ENCODE measurements at regions of chr17 and their contacts with region 1.

Region 1: DNA sequence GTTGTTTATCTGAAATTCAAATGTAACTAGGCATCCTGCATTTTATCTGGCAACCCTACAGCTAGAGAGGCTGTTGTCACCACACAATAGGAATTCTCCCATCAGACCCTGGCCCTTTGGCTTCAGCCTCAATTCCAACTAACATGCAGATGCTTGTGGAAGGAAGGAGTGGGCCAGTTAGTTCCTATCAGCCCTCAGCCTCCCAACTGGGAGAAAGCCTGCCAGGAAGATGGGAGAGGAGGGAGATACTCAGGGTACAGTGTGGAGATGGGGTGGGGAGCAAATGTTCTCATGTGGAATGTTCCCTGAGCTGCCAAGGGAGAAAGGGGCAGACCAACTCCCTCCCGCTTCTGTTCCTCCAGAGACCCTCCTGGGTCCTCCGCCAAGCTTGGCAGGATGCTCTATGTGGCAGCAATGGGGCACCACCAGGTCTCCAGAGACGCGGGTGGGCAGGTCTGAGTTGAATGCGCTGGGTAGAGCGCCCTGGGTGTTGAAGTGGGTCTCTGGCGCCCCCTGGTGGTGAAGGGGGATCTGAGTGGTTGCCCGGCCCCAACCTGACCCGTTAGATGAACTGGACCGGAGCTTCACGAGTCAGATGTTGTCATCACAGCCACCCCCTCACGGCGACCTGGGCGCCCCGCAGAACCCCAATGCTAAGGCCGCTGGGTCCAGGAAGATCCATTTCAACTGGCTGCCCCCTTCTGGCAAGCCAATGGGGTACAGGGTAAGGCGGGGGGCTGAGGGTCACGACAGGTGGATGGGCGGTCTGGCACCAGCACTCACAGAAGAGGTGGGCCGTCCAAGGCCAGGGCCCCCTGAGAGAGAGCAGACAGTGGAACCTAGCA is 15.2 kb downstream of the GALK1 start:
- DNase-seq: peak; percentile 65 to 98 (median 80)
- ATAC-seq: peak; percentile 71
- H3K4me3 ChIP-seq: no peak overlapping the region
- H3K27ac ChIP-seq: no peak overlapping the region
- H3K4me1 ChIP-seq: peaks cover 5 to 33% of the 10 kb centered on the region in 2 donors
- H3K27me3 ChIP-seq: no peaks in the 10 kb centered on the region
- CTCF ChIP-seq: peak; percentile 88 to 98

Region 2: GRCh38 chr17:75428543-75429469 is 321.0 kb before region 1 on chr17:
- intact Hi-C with region 1: loop called in 1 of 2 experiments (anchors 10 kb)
- DNase-seq: peak in 1 of 4 donors; percentile 26
- ATAC-seq: peak; percentile 21
- H3K4me3 ChIP-seq: no peak overlapping the region
- H3K27ac ChIP-seq: peak overlapping the region; percentile 30 to 65
- H3K4me1 ChIP-seq: peaks cover 8 to 24% of the 10 kb centered on the region in 2 donors
- H3K27me3 ChIP-seq: no peaks in the 10 kb centered on the region
- CTCF ChIP-seq: no peak

Region 3: DNA sequence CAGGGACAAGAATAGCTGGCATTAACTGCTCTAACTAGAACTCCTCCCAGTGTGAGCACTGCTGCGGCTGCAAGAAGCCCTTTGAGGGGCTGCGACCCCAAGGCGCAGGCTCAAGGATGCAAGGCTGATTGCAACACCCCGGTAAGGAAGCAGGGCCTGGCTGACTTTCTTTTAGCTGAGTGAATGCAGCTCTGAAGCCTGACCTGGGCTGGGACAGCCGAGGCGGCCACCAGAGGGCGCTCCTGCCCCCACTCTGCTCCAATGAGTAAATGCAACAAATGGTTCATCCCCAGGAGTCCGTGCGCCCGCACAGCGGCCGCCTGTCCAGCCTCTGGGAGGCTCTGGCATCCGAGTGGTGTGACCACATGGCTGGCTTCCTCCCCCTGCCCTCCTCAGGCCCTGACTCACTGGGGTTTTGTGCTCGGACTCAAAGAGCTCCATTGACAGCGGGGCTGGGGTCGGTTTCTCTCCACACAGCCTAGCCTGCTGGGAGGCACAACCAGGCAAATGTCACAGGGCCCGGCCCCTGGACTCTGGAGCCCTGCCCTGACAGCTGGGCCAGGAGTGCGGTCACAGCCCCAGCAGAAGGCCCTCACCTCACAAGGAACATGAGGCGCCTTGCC is 116.8 kb before region 1 on chr17 and contains the start of gene SMIM5:
- intact Hi-C with region 1: loop called in 1 of 2 experiments (anchors 10 kb)
- DNase-seq: peak; percentile 72 to 98 (median 88)
- ATAC-seq: peak; percentile 88
- H3K4me3 ChIP-seq: no peak within 1 kb of the TSS
- H3K27ac ChIP-seq: peak within 1 kb of the TSS; percentile 63 to 76
- H3K4me1 ChIP-seq: peaks cover 12 to 41% of the 10 kb centered on the region in 2 donors
- H3K27me3 ChIP-seq: no peaks in the 10 kb centered on the region
- CTCF ChIP-seq: peak; percentile 97 to 99
- polyA plus RNA-seq, gene SMIM5: 1.7 to 3.4 (median 2.4) TPM

Region 4: GRCh38 chr17:75673487-75673886 is 76.3 kb before region 1 on chr17:
- intact Hi-C with region 1: loop called in 1 of 2 experiments (anchors 5 kb)
- DNase-seq: no peak
- ATAC-seq: no peak
- H3K4me3 ChIP-seq: no peak overlapping the region
- H3K27ac ChIP-seq: no peak overlapping the region
- H3K4me1 ChIP-seq: peaks cover 0 to 29% of the 10 kb centered on the region in 2 donors
- H3K27me3 ChIP-seq: no peaks in the 10 kb centered on the region
- CTCF ChIP-seq: no peak

Region 5: GRCh38 chr17:76481071-76481655 is 731.4 kb after region 1 on chr17:
- intact Hi-C with region 1: no loop called
- DNase-seq: no peak
- ATAC-seq: peak; percentile 6
- H3K4me3 ChIP-seq: no peak overlapping the region
- H3K27ac ChIP-seq: peak overlapping the region in 1 of 2 donors; percentile 23
- H3K4me1 ChIP-seq: peaks cover 0 to 55% of the 10 kb centered on the region in 2 donors
- H3K27me3 ChIP-seq: no peaks in the 10 kb centered on the region
- CTCF ChIP-seq: no peak

Region 6: DNA sequence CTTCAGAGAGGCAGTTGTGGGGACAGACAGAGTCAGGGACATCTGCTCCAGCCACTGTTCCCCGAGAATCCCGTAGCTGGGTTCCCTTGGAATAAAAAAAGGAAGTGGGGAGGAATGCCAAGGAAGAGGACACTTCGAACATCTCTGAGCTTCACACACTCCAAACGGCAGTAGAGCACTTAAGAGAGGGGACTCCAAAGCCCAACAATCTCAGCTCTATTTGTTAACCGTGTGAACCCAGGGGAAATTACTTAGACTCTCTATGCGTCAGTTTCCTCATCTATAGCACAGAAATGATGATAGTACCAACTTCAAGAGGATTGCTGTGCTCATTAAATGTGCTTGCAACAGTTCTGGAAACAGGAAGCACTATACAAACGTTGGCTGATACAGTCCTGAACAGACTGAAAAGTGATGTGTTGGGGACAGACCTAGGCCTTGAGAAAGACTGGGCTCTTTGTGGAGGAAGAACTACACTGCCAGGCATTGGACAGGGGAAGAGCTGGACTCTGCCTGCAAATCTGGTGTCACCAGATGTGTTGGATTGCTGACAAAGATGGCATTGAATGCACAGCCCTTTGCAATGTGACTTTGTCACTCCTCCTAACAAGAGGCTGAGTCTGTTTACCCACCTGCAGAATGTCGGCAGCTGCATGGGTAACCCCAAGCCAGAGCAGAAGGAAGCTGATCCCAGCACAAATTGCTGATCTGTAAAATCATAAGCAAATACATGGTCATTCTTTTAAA is 848.1 kb after region 1 on chr17:
- intact Hi-C with region 1: no loop called
- DNase-seq: no peak
- ATAC-seq: peak; percentile 54
- H3K4me3 ChIP-seq: no peak overlapping the region
- H3K27ac ChIP-seq: peak overlapping the region in 1 of 2 donors; percentile 64
- H3K4me1 ChIP-seq: peaks cover 0 to 51% of the 10 kb centered on the region in 2 donors
- H3K27me3 ChIP-seq: no peaks in the 10 kb centered on the region
- CTCF ChIP-seq: no peak

Measured in left lung (tissue), 14 donors.